Calu3 (cell line): ENCODE measurements at regions of chr1 and their contacts with region 1.

Region 1: DNA sequence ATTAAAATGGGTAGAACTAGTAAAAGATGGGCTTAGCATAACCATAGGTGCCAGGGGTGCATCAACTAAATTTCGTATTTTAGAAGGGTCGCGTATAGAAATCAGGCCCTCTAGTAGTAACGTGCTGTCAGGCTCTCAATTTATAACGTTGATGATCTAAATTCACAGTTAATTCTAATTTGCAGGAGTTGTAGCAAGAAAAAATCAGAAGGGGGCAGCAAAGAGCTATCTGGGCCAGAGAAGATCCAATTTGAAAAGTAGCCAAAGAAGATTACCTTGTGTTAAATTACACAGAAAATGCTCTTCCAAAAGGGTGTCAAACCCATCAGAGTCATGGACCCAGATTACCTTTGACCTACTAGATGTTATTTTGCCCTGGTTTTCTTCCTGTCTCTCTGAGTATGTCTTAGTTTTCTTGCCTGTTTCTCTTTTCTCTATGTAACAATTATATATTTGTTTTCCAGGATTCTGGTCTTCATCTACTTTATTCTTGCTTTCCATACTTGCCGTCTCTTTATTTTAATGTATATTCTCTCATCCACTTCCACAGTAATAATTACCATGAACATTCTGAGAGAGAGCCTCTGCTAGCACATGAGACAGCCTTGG is 1030.9 kb downstream of the AMY1C start:
- DNase-seq: peak; percentile 32
- H3K4me3 Mint-ChIP-seq: no peak overlapping the region
- H3K27ac Mint-ChIP-seq: no peak overlapping the region
- H3K4me1 Mint-ChIP-seq: no peaks in the 10 kb centered on the region
- H3K27me3 Mint-ChIP-seq: no peaks in the 10 kb centered on the region
- CTCF ChIP-seq: peak; percentile 29

Region 2: GRCh38 chr1:105027838-105028471 is 247.4 kb after region 1 on chr1:
- CTCF ChIA-PET with region 1: no interaction called
- intact Hi-C with region 1: loop called (anchors 10 kb)
- DNase-seq: no peak
- H3K4me3 Mint-ChIP-seq: no peak overlapping the region
- H3K27ac Mint-ChIP-seq: no peak overlapping the region
- H3K4me1 Mint-ChIP-seq: no peaks in the 10 kb centered on the region
- H3K27me3 Mint-ChIP-seq: no peaks in the 10 kb centered on the region
- CTCF ChIP-seq: no peak

Region 3: GRCh38 chr1:105793536-105794146 is 1013.1 kb after region 1 on chr1:
- CTCF ChIA-PET with region 1: no interaction called
- intact Hi-C with region 1: loop called (anchors 5 kb)
- DNase-seq: peak; percentile 30
- H3K4me3 Mint-ChIP-seq: no peak overlapping the region
- H3K27ac Mint-ChIP-seq: no peak overlapping the region
- H3K4me1 Mint-ChIP-seq: no peaks in the 10 kb centered on the region
- H3K27me3 Mint-ChIP-seq: no peaks in the 10 kb centered on the region
- CTCF ChIP-seq: no peak